ENCODE measurements at regions of chr2 and their contacts with region 1.

Region 1: GRCh38 chr2:195559431-195559914 is 97.6 kb upstream of the SLC39A10 start:
- DNase-seq: peak; percentile 92
- ATAC-seq: peak; percentile 84
- H3K4me3 Mint-ChIP-seq: peak overlapping the region; percentile 54
- H3K27ac Mint-ChIP-seq: peak overlapping the region; percentile 97
- H3K4me1 Mint-ChIP-seq: peaks cover 62% of the 10 kb centered on the region
- H3K27me3 Mint-ChIP-seq: no peaks in the 10 kb centered on the region
- CTCF ChIP-seq: no peak

Region 2: GRCh38 chr2:195543902-195544894 is 15.3 kb before region 1 on chr2:
- CTCF ChIA-PET with region 1: interaction called, 5 read pairs
- POLR2A ChIA-PET with region 1: interaction called, 30 read pairs
- intact Hi-C with region 1: no loop called
- DNase-seq: no peak
- ATAC-seq: peak; percentile 91
- H3K4me3 Mint-ChIP-seq: no peak overlapping the region
- H3K27ac Mint-ChIP-seq: peak overlapping the region; percentile 87
- H3K4me1 Mint-ChIP-seq: peaks cover 33% of the 10 kb centered on the region
- H3K27me3 Mint-ChIP-seq: no peaks in the 10 kb centered on the region
- CTCF ChIP-seq: no peak

Region 3: GRCh38 chr2:195575879-195576401 is 16.5 kb after region 1 on chr2:
- CTCF ChIA-PET with region 1: interaction called, 13 read pairs
- POLR2A ChIA-PET with region 1: interaction called, 4 read pairs
- intact Hi-C with region 1: no loop called
- DNase-seq: peak; percentile 48
- ATAC-seq: peak; percentile 72
- H3K4me3 Mint-ChIP-seq: no peak overlapping the region
- H3K27ac Mint-ChIP-seq: peak overlapping the region; percentile 47
- H3K4me1 Mint-ChIP-seq: peaks cover 53% of the 10 kb centered on the region
- H3K27me3 Mint-ChIP-seq: no peaks in the 10 kb centered on the region
- CTCF ChIP-seq: peak; percentile 36

Region 4: DNA sequence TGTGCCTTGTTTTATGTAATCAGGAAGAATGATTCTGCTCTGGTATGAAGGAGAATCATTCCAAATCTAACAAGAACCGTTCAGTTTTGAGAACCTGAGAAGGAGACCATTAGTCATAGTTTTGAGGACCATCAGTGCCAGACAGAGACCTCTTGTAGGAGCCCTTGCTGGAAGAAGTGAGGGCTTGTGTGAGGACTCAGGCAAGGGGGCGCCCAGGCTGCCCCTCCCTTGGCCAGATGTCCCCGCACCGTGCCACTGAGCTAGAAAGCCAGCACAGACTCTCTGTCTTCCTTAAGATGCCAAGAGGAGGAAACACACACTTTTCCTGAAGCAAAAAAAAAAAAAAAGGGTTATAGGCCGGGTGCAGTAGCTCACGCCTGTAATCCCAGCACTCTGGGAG is 41.9 kb after region 1 on chr2:
- CTCF ChIA-PET with region 1: no interaction called
- POLR2A ChIA-PET with region 1: no interaction called
- intact Hi-C with region 1: no loop called
- DNase-seq: no peak
- ATAC-seq: no peak
- H3K4me3 Mint-ChIP-seq: no peak overlapping the region
- H3K27ac Mint-ChIP-seq: no peak overlapping the region
- H3K4me1 Mint-ChIP-seq: peaks cover 7% of the 10 kb centered on the region
- H3K27me3 Mint-ChIP-seq: no peaks in the 10 kb centered on the region
- CTCF ChIP-seq: no peak

Measured in activated CD8-positive, alpha-beta T cell treated with anti-CD3 and anti-CD28 coated beads for 36 hours (primary cell).